ENCODE measurements at regions of chr10 and their contacts with region 1.

Region 1: GRCh38 chr10:95841661-95842498 is 65.9 kb upstream of the CC2D2B start:
- DNase-seq: no peak
- ATAC-seq: peak; percentile 44

Region 2: DNA sequence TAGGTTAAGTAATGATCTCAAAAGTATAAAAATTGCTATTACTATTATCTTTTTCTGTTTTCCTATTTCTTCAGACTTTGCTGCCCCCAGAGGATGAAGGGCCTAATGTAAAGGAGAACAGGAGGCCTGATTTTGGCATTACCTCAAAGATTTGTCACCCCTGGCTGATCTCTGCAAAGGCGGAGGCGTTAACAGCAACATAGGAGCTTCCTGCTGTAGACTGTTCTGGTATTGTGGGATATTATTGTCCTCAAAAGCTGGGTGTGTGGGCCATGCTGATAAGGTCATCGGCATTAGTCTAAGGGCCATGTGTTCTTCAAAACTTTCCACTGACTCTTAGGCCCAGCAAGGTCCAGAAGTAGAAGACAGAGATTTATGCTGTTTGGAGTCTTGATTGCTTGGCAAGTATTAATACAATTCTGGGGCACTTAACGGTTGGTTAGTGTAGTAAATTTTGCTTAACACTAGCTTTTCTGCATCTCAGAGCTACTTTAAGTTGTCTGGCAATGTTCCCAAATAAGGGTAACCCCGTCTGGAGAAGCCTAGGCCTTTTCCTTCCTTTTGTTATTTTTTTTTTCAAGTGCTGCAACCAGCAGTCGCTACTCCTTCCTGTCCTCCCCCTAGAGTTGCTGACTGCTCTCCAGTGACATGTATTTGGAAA is 99.9 kb before region 1 on chr10:
- intact Hi-C with region 1: loop called (anchors 5 kb)
- DNase-seq: no peak
- ATAC-seq: peak; percentile 62

Region 3: DNA sequence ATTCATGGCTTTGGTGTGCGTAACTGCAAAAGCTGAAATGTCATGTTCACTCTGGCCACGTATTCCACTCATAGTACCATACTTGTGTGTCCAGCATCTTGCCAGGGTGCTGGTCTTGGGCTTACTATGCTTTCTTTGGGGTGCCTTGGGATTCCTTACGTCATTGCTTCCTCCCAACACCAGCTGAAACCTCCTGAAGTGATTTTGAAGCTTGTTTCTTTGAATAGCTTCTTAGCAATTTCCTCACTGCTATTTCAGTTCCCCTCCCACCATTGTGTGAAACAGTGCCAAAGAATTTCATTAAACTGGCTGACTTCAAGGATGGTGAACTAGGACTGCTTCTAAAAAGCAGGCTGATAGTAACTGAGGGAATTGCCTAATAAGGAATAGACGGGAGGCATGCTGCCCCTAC is 49.0 kb before region 1 on chr10:
- intact Hi-C with region 1: loop called (anchors 5 kb)
- DNase-seq: no peak
- ATAC-seq: peak; percentile 42

Measured in Right ventricle myocardium inferior (tissue), 1 donor.